ENCODE measurements at regions of chr1 and their contacts with region 1.

Region 1: GRCh38 chr1:153670859-153671627 is at the start of gene ILF2:
- DNase-seq: peak; percentile 96 to 99 (median 97)
- H3K4me3 ChIP-seq: peak within 1 kb of the TSS; percentile 71
- H3K27ac ChIP-seq: peak within 1 kb of the TSS; percentile 49 to 78
- H3K4me1 ChIP-seq: peaks cover 3% of the 10 kb centered on the region
- H3K27me3 ChIP-seq: no peaks in the 10 kb centered on the region
- CTCF ChIP-seq: peak in 1 of 3 donors; percentile 36
- EP300 ChIP-seq: peak; percentile 41
- POLR2A ChIP-seq: peak; percentile 94
- total RNA-seq, gene ILF2: 92.5 to 133 (median 122) TPM

Region 2: GRCh38 chr1:153498746-153499145 is 172.3 kb before region 1 on chr1:
- intact Hi-C with region 1: no loop called
- DNase-seq: no peak
- H3K4me3 ChIP-seq: no peak overlapping the region
- H3K27ac ChIP-seq: no peak overlapping the region
- H3K4me1 ChIP-seq: peaks cover 10% of the 10 kb centered on the region
- H3K27me3 ChIP-seq: no peaks in the 10 kb centered on the region
- CTCF ChIP-seq: no peak
- EP300 ChIP-seq: no peak
- POLR2A ChIP-seq: no peak

Region 3: GRCh38 chr1:153532769-153533599 is 138.1 kb before region 1 on chr1:
- intact Hi-C with region 1: loop called in 1 of 4 experiments (anchors 5 kb)
- DNase-seq: peak; percentile 87 to 92 (median 90)
- H3K4me3 ChIP-seq: peak overlapping the region; percentile 56
- H3K27ac ChIP-seq: peak overlapping the region; percentile 31 to 97
- H3K4me1 ChIP-seq: peaks cover 18% of the 10 kb centered on the region
- H3K27me3 ChIP-seq: no peaks in the 10 kb centered on the region
- CTCF ChIP-seq: peak; percentile 79 to 91 (median 87)
- EP300 ChIP-seq: no peak
- POLR2A ChIP-seq: peak; percentile 14

Region 4: GRCh38 chr1:153577624-153578051 is 93.4 kb before region 1 on chr1:
- intact Hi-C with region 1: loop called in 1 of 4 experiments (anchors 5 kb)
- DNase-seq: no peak
- H3K4me3 ChIP-seq: no peak overlapping the region
- H3K27ac ChIP-seq: no peak overlapping the region
- H3K4me1 ChIP-seq: peaks cover 2% of the 10 kb centered on the region
- H3K27me3 ChIP-seq: no peaks in the 10 kb centered on the region
- CTCF ChIP-seq: no peak
- EP300 ChIP-seq: no peak
- POLR2A ChIP-seq: no peak

Region 5: GRCh38 chr1:153617675-153618074 is 53.4 kb before region 1 on chr1:
- intact Hi-C with region 1: loop called in 1 of 4 experiments (anchors 2 kb)
- DNase-seq: peak in 4 of 5 donors; percentile 49 to 79 (median 70)
- H3K4me3 ChIP-seq: no peak overlapping the region
- H3K27ac ChIP-seq: no peak overlapping the region
- H3K4me1 ChIP-seq: peaks cover 11% of the 10 kb centered on the region
- H3K27me3 ChIP-seq: no peaks in the 10 kb centered on the region
- CTCF ChIP-seq: peak in 1 of 3 donors; percentile 60
- EP300 ChIP-seq: no peak
- POLR2A ChIP-seq: no peak

Region 6: GRCh38 chr1:153946622-153947241 is 275.7 kb after region 1 on chr1 and contains the start of gene DENND4B:
- intact Hi-C with region 1: loop called in 2 of 4 experiments (anchors 10 kb)
- DNase-seq: peak; percentile 82 to 90 (median 87)
- H3K4me3 ChIP-seq: peak within 1 kb of the TSS; percentile 88
- H3K27ac ChIP-seq: peak within 1 kb of the TSS; percentile 95 to 97
- H3K4me1 ChIP-seq: peaks cover 7% of the 10 kb centered on the region
- H3K27me3 ChIP-seq: no peaks in the 10 kb centered on the region
- CTCF ChIP-seq: peak; percentile 88 to 97 (median 92)
- EP300 ChIP-seq: no peak
- POLR2A ChIP-seq: no peak
- total RNA-seq, gene DENND4B: 21.3 to 83.1 (median 57.3) TPM

Region 7: GRCh38 chr1:153985941-153986761 is 315.1 kb after region 1 on chr1 and contains the start of gene RAB13:
- intact Hi-C with region 1: loop called in 3 of 4 experiments (anchors 5 to 10 kb)
- DNase-seq: peak; percentile 87 to 89 (median 88)
- H3K4me3 ChIP-seq: peak within 1 kb of the TSS; percentile 39
- H3K27ac ChIP-seq: peak within 1 kb of the TSS; percentile 71 to 84
- H3K4me1 ChIP-seq: peaks cover 8% of the 10 kb centered on the region
- H3K27me3 ChIP-seq: no peaks in the 10 kb centered on the region
- CTCF ChIP-seq: no peak
- EP300 ChIP-seq: peak; percentile 57
- POLR2A ChIP-seq: no peak
- total RNA-seq, gene RAB13: 31.4 to 147 (median 101) TPM

Measured in ovary (tissue), 10 donors.